ENCODE measurements at regions of chr5 and their contacts with region 1.

Region 1: DNA sequence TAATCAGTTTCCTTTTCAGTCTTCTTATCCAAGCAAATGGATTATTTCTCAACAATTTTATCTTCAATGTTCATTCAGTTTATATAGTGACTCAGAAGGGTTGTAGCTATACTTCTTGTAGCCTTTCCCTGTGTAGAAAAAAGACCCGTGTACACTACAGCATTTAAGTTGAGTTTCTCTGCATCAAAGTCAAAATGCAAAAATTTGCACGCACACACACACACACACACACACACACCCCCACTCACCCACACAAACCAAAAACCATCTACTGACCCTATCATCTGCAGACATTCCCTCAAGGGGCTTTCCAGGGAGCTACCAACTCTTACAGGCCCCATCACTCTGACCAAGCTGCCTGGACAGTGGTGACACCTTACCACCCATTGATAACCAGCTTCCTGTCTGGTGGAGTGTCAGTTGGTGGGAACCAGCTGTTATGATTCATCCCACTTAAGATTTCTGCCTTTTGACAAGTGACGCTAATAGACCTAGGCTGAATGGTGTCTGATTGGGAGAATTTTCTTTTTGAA is 12.2 kb upstream of the ELL2 start:
- DNase-seq: no peak
- H3K4me3 ChIP-seq: no peak overlapping the region
- H3K27ac ChIP-seq: no peak overlapping the region
- H3K4me1 ChIP-seq: no peaks in the 10 kb centered on the region
- H3K27me3 ChIP-seq: no peaks in the 10 kb centered on the region
- CTCF ChIP-seq: no peak

Region 2: DNA sequence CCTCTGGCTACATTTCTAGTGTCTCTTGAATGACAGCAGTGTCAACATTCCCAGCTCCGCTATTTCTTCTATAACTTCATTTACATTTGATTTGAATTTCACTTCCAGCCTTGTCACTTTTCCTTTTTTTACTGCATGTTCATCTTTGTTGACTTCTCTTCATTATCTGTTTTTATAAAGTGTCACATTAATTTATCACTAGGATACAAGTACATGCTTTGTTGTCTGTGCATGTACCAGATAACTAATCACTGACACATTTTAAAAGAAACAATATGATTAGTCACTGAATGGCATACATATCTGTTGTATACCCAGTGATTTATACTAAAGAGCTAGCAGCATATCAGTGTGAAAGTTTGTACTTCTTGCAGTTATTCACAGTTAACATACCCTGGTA is 389.9 kb before region 1 on chr5:
- CTCF ChIA-PET with region 1: no interaction called
- dilution Hi-C with region 1: no loop called
- in situ Hi-C with region 1: no loop called
- intact Hi-C with region 1: no loop called
- DNase-seq: no peak
- H3K4me3 ChIP-seq: no peak overlapping the region
- H3K27ac ChIP-seq: no peak overlapping the region
- H3K4me1 ChIP-seq: no peaks in the 10 kb centered on the region
- H3K27me3 ChIP-seq: no peaks in the 10 kb centered on the region
- CTCF ChIP-seq: no peak

Region 3: GRCh38 chr5:95686651-95687050 is 287.2 kb before region 1 on chr5:
- CTCF ChIA-PET with region 1: no interaction called
- dilution Hi-C with region 1: no loop called
- in situ Hi-C with region 1: no loop called
- intact Hi-C with region 1: no loop called
- DNase-seq: no peak
- H3K4me3 ChIP-seq: no peak overlapping the region
- H3K27ac ChIP-seq: no peak overlapping the region
- H3K4me1 ChIP-seq: no peaks in the 10 kb centered on the region
- H3K27me3 ChIP-seq: peaks cover 7% of the 10 kb centered on the region
- CTCF ChIP-seq: no peak

Region 4: DNA sequence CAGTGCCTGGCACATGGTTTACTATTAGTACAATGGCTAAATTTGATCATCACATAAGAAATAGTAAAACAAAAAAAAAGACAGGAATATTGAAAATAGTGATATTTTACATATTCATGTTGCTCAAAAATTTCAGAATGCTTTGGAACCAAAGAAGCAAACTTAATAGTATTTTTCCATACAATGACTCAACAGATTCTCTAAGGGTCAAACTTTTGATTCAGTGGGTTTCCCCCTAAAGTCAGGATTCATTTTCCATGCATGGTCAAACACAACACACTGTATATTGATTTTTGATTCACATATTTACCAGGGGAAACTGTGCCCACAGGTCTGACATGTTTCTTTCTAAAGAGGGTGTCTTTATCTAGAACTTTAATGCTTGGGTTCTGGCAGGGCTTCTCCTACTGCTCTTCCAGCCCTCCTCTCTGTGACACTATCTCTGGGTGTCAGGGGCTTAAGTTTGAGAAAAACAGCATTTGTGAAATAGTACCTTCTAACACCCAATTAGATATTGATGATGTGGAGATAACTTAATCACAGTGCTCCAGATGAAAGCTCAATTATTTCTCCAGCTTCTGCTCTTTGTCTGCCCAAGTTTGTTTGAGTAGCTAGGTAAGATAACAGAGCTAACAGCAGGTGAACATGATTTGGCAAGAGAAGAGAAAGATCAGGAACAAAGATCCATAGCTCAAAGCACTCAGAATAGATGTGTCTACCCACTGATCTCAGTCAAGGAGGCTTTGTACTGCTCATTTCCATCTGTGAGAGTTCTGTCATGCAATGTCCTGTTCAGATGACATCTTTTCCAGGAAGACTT is 23.3 kb after region 1 on chr5:
- CTCF ChIA-PET with region 1: no interaction called
- dilution Hi-C with region 1: no loop called
- in situ Hi-C with region 1: no loop called
- intact Hi-C with region 1: no loop called
- DNase-seq: no peak
- H3K4me3 ChIP-seq: no peak overlapping the region
- H3K27ac ChIP-seq: no peak overlapping the region
- H3K4me1 ChIP-seq: no peaks in the 10 kb centered on the region
- H3K27me3 ChIP-seq: no peaks in the 10 kb centered on the region
- CTCF ChIP-seq: no peak

Region 5: GRCh38 chr5:96013254-96013653 is 39.4 kb after region 1 on chr5:
- CTCF ChIA-PET with region 1: interaction called, 16 read pairs
- dilution Hi-C with region 1: no loop called
- in situ Hi-C with region 1: no loop called
- intact Hi-C with region 1: no loop called
- DNase-seq: no peak
- H3K4me3 ChIP-seq: no peak overlapping the region
- H3K27ac ChIP-seq: no peak overlapping the region
- H3K4me1 ChIP-seq: peaks cover 8% of the 10 kb centered on the region
- H3K27me3 ChIP-seq: no peaks in the 10 kb centered on the region
- CTCF ChIP-seq: no peak